PC-3 (cell line): ENCODE measurements at regions of chr10 and their contacts with region 1.

Region 1: GRCh38 chr10:58691528-58691927 is 178.9 kb downstream of the BICC1 start:
- DNase-seq: no peak
- ATAC-seq: no peak
- H3K4me3 ChIP-seq: no peak overlapping the region
- H3K27ac ChIP-seq: no peak overlapping the region
- H3K4me1 ChIP-seq: no peaks in the 10 kb centered on the region
- H3K27me3 ChIP-seq: peaks cover 23% of the 10 kb centered on the region; the same call in 1 of the 2 replicates
- CTCF ChIP-seq: no peak

Region 2: DNA sequence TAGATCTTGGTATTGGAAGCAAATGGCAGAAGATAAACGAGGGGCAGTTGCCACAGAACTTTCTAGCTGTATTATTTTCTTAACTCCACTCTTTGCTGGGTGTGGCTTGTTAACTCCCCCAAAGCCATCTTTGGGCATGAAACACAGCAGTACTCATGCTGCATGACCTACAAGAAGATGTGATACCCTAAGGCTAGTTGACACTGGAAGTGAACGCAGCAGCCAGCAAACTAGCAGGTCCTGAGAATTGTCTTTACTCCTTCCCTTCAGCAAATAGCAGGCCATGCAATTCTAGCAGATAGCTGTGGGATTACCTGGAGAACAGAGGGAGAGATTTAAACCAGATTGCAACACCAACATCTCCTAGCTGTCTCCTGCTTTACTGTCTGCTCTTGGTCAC is 1642.5 kb before region 1 on chr10:
- CTCF ChIA-PET with region 1: no interaction called
- POLR2A ChIA-PET with region 1: no interaction called
- intact Hi-C with region 1: no loop called
- DNase-seq: no peak
- ATAC-seq: no peak
- H3K4me3 ChIP-seq: no peak overlapping the region
- H3K27ac ChIP-seq: no peak overlapping the region
- H3K4me1 ChIP-seq: no peaks in the 10 kb centered on the region
- H3K27me3 ChIP-seq: no peaks in the 10 kb centered on the region
- CTCF ChIP-seq: no peak

Region 3: DNA sequence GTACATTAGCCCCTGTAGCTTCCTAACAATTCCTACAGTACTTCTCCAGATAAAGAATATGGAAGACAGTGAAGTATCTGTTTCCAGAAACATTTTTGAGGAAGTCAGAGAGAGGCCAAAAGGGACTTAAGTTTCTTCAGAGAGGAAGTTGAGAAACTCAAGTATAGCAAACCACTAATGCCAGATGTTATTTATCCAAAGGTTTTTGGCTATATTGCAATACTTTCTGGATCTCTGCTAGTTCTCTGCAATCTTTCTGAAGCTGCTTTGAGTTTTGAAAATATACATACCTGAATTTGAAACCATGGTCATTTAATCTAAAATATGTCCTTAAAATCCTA is 114.1 kb before region 1 on chr10:
- CTCF ChIA-PET with region 1: no interaction called
- POLR2A ChIA-PET with region 1: no interaction called
- intact Hi-C with region 1: no loop called
- DNase-seq: no peak
- ATAC-seq: no peak
- H3K4me3 ChIP-seq: no peak overlapping the region
- H3K27ac ChIP-seq: no peak overlapping the region
- H3K4me1 ChIP-seq: no peaks in the 10 kb centered on the region
- H3K27me3 ChIP-seq: peaks cover 19% of the 10 kb centered on the region
- CTCF ChIP-seq: no peak

Region 4: DNA sequence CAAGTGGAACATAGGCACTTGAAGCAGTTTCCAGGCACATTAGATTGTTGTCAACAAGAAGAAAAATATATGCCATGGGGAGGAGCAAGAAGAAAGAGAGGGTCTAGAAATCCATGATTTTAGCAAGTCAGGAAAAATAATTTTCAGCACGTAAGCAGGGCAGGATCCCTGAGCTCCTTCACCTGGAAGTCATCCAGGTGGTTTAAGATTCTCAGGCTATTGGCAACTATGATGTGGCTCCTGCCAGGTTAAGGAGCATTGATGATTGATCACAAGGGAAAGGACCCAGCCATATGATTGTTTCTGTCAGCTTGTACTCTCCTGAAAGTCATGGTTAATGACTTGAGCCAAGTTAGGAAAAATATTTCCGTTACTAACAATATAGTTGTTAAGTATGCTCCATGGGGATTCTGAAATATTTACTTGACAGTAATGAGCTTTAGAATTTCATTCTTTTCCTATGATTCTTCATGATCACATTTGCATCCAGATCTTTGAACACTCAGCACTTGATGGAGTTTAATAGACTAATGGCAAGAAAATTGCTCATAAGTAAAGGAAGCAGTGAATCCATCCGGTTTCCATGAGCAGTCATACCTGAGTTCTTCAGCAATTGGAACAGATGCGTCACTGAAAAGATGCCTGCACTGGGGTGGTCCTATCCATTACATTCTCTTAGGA is 30.2 kb after region 1 on chr10:
- CTCF ChIA-PET with region 1: no interaction called
- POLR2A ChIA-PET with region 1: no interaction called
- intact Hi-C with region 1: loop called (anchors 1 kb)
- DNase-seq: no peak
- ATAC-seq: no peak
- H3K4me3 ChIP-seq: no peak overlapping the region
- H3K27ac ChIP-seq: no peak overlapping the region
- H3K4me1 ChIP-seq: no peaks in the 10 kb centered on the region
- H3K27me3 ChIP-seq: no peaks in the 10 kb centered on the region; the same call in 1 of the 2 replicates
- CTCF ChIP-seq: no peak